Pancreas (tissue), 10 donors: ENCODE measurements at regions of chr1 and their contacts with region 1.

Region 1: DNA sequence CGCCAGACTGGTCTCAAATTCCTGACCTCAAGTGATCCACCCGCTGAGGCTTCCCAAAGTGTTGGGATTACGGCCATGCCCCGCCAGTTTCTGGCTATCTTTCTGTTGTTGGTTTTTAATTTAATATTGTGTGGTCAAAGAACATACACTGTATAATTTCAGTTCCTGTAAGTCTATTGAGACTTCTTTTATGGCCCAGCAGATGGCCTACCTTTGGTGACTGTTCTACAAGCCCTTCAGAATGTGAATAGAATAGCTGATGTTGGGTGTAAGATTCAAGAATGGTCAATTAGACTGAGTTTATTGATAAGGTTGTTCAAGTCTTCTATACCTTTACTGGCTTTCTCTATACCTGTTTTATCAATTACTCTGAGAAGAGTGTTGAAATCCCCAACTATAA is 10.7 kb downstream of the HES2 start:
- DNase-seq: no peak
- ATAC-seq: no peak
- H3K4me3 ChIP-seq: no peak overlapping the region
- H3K27ac ChIP-seq: no peak overlapping the region
- H3K4me1 ChIP-seq: no peaks in the 10 kb centered on the region
- H3K27me3 ChIP-seq: no peaks in the 10 kb centered on the region
- CTCF ChIP-seq: no peak

Region 2: GRCh38 chr1:6273380-6273891 is 135.6 kb before region 1 on chr1:
- intact Hi-C with region 1: no loop called
- DNase-seq: peak in 1 of 6 donors; percentile 32
- ATAC-seq: no peak
- H3K4me3 ChIP-seq: no peak overlapping the region
- H3K27ac ChIP-seq: no peak overlapping the region
- H3K4me1 ChIP-seq: no peaks in the 10 kb centered on the region
- H3K27me3 ChIP-seq: no peaks in the 10 kb centered on the region
- CTCF ChIP-seq: no peak

Region 3: GRCh38 chr1:6343506-6344405 is 65.3 kb before region 1 on chr1:
- intact Hi-C with region 1: loop called in 1 of 3 experiments (anchors 5 kb)
- DNase-seq: peak in 4 of 6 donors; percentile 40 to 78 (median 59)
- ATAC-seq: peak; percentile 64 to 89 (median 82)
- H3K4me3 ChIP-seq: no peak overlapping the region
- H3K27ac ChIP-seq: no peak overlapping the region
- H3K4me1 ChIP-seq: no peaks in the 10 kb centered on the region
- H3K27me3 ChIP-seq: no peaks in the 10 kb centered on the region
- CTCF ChIP-seq: peak; percentile 25 to 68 (median 41)

Region 4: DNA sequence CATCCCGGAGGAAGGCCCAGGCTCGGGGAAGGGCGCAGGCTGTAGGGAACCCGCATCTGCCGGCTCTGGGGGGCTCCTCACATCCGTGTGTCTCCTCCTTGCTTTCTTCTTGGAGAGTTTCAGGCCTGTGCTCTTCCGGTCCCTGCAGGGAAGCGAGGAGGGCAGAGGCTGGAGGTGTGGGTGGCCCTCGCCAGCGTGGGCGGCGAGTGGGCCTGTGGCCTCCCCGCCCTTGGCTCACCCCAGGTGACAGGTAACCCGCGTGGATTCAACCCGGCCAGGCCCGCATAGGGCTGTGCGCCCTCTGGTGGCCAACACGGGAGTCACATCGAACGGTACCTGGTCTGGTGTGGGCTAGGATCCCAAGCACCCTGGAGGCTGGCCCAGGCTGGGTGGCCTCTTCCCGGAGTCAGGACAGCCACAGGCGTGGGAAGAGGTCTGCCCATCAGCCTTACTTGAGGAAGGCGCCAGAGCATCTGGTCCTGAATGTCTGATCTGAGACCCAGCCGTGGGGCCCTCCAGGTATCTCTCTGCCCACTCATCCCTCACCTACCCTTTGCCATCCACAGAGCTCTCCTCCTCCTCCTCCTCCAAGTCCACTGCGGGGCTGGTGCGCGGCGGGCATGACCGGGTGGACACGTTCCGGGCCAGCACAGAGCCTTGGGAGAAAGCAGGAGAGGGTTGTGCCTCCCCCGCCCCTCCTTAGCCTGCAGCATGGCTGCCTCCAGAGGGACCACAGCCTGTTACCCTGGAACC is 66.5 kb after region 1 on chr1:
- intact Hi-C with region 1: no loop called
- DNase-seq: peak; percentile 52 to 92 (median 76)
- ATAC-seq: peak; percentile 81 to 96 (median 86)
- H3K4me3 ChIP-seq: no peak overlapping the region
- H3K27ac ChIP-seq: no peak overlapping the region
- H3K4me1 ChIP-seq: no peaks in the 10 kb centered on the region
- H3K27me3 ChIP-seq: no peaks in the 10 kb centered on the region
- CTCF ChIP-seq: peak; percentile 90 to 94 (median 92)

Region 5: GRCh38 chr1:6538956-6539355 is 129.9 kb after region 1 on chr1:
- intact Hi-C with region 1: no loop called
- DNase-seq: no peak
- ATAC-seq: no peak
- H3K4me3 ChIP-seq: no peak overlapping the region
- H3K27ac ChIP-seq: no peak overlapping the region
- H3K4me1 ChIP-seq: no peaks in the 10 kb centered on the region
- H3K27me3 ChIP-seq: no peaks in the 10 kb centered on the region
- CTCF ChIP-seq: no peak